Mammary epithelial cell (primary cell): ENCODE measurements at regions of chr9 and their contacts with region 1.

Region 1: DNA sequence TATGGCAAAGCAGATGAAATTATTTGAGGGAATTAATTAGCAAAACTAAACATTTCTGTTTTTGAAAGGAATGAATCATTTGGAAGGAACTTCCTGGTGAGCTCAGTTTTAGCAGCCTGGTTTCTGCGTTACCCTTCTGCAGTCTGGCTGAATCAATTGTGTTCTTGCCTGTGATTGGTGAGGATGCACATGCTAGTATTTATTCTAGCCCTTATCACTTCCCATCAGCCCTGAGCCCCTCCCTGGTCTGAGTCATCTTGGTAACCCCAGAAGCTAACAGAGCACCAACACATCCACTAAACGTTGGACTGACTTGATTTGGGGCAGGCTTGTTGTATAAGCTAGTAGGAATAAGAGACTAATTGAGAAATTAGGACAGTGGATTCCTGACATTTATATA is 6.6 kb downstream of the TJP2 start:
- DNase-seq: peak; percentile 98
- H3K4me3 ChIP-seq: peak overlapping the region in 1 of 3 experiments; percentile 13
- H3K27ac ChIP-seq: peak overlapping the region; percentile 99
- H3K4me1 ChIP-seq: peaks cover 59% of the 10 kb centered on the region
- H3K27me3 ChIP-seq: no peaks in the 10 kb centered on the region
- CTCF ChIP-seq: no peak

Region 2: GRCh38 chr9:69131682-69132081 is 49.0 kb before region 1 on chr9:
- CTCF ChIA-PET with region 1: no interaction called
- dilution Hi-C with region 1: no loop called
- in situ Hi-C with region 1: loop called in 1 of 2 experiments (anchors 10 kb)
- intact Hi-C with region 1: loop called (anchors 2 kb)
- DNase-seq: peak; percentile 98
- H3K4me3 ChIP-seq: no peak overlapping the region
- H3K27ac ChIP-seq: peak overlapping the region; percentile 91
- H3K4me1 ChIP-seq: peaks cover 28% of the 10 kb centered on the region
- H3K27me3 ChIP-seq: no peaks in the 10 kb centered on the region
- CTCF ChIP-seq: no peak